HEK293 (cell line): ENCODE measurements at regions of chr1 and their contacts with region 1.

Region 1: DNA sequence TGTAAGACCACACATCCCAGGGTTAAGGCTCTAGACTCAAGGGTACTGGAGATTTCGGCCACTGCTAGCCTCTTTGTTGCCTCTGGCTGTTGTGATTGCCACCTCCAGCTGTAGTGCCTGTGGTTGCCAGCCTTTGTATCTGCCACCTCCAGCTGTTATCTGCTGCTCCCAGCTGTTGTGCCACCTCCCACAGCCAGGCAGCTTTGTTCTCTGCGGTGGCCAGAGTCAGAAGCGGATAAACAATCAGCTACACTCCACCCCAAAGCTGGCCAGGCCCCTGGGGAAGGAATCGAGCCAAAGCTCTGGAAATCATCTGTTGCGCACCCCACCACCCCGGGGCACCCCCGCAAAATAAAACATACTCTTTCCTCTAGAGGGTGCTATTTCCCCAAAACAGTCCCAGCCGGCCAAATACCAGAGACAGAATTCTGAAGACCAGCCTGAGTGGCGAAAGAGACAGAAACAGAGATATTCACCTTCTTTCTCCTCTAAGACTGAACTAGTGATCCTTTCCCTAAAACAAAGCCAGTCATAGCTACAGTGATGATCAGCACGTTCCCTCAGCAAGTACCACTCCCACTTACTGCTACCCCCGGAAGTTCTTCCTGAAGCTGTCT is 14.8 kb upstream of the PIGM start:
- H3K4me3 ChIP-seq: no peak overlapping the region
- H3K27ac ChIP-seq: no peak overlapping the region
- H3K4me1 ChIP-seq: no peaks in the 10 kb centered on the region
- CTCF ChIP-seq: peak; percentile 59

Region 2: GRCh38 chr1:159532922-159533321 is 513.7 kb before region 1 on chr1:
- CTCF ChIA-PET with region 1: no interaction called
- POLR2A ChIA-PET with region 1: no interaction called
- H3K4me3 ChIP-seq: no peak overlapping the region
- H3K27ac ChIP-seq: no peak overlapping the region
- H3K4me1 ChIP-seq: no peaks in the 10 kb centered on the region
- CTCF ChIP-seq: no peak

Region 3: GRCh38 chr1:159987186-159987585 is 59.4 kb before region 1 on chr1:
- CTCF ChIA-PET with region 1: no interaction called
- POLR2A ChIA-PET with region 1: no interaction called
- H3K4me3 ChIP-seq: no peak overlapping the region
- H3K27ac ChIP-seq: no peak overlapping the region
- H3K4me1 ChIP-seq: no peaks in the 10 kb centered on the region
- CTCF ChIP-seq: no peak

Region 4: DNA sequence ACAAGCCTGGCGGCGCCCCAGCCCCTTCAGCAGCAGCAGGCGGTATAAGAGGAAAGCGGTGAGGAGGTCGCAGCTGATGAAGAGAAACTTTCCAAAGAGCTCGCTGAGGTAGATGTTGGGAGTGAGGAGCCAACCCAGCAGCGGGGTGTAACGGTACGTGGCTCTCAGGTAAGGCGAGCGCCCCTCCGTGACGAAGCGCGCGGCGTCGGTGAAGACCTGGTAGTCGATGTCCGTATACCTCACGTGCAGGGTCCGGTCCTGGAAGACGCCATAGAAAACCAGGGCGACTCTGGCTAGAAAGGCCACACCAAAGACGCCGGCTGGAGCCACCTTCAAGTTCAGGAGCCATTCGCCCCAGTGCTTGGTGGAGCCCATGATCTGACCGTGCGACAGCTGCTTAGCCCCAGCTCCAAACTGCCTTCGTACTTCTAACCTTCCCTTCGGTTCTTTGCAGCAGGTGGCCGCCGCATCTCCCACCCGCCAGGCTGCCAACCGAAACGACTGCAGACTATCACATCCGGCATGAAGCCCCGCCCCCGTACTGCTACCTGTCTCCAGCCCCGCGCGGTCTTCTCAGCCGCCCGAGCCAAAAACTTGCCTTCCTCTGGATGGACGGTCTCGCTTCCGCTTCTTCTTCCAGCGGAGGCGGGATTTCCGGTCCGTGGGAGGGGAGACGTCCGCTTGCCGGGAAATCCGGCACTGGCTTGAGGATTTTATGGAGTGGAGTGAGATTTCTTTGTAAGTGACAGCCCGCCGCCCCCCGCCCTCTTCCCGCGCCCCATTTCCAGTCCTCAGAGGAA is 15.0 kb before region 1 on chr1 and contains the start of gene PIGM:
- CTCF ChIA-PET with region 1: interaction called, 49 read pairs
- POLR2A ChIA-PET with region 1: no interaction called
- H3K4me3 ChIP-seq: peak within 1 kb of the TSS; percentile 82
- H3K27ac ChIP-seq: peak within 1 kb of the TSS; percentile 72
- H3K4me1 ChIP-seq: peaks cover 17% of the 10 kb centered on the region; the same call in 1 of the 2 replicates
- CTCF ChIP-seq: 0 out of 2 replicates have a peak, but pooled peaks have one; percentile 23

Region 5: DNA sequence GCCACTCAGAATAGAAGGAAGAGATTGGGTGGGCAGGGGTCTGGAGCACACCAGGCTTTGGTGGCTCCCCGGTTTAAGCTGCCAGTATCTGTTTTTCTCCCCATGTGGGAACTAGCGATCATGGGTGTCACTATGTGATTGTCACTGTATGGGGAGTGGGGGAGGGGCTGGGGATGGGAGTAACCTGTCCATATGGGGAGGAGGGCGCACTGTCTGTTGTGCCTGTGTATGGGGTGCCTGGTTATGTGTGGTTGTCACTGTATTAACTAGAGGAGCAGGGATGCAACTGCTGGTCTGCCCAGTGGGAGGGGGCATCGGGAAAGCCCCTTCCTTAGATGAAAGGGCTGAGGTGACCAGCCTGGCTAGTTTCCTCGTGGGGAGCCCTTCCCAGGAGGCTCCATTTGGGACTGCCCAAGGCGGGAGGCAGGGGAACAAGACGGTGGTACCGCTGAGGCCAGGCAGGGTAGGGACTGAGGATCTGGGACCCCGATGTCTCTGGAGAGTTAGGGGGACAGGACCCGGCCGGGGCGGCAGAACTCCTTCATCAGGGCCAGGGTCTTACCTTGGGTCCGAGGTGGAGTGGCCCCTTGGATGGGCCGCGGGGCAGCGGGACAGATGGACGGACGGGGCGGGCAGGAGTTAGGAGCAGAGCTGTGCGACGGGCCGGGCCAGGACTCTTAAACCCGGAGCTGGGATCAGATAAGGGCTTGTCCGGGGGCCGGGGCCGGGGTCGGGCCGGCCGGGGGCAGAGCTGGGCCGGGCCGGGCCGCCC is 23.0 kb after region 1 on chr1 and contains the start of gene KCNJ10:
- CTCF ChIA-PET with region 1: interaction called, 541 read pairs
- POLR2A ChIA-PET with region 1: no interaction called
- H3K4me3 ChIP-seq: peak within 1 kb of the TSS; percentile 56
- H3K27ac ChIP-seq: no peak within 1 kb of the TSS
- H3K4me1 ChIP-seq: no peaks in the 10 kb centered on the region; the same call in 1 of the 2 replicates
- CTCF ChIP-seq: no peak